ENCODE measurements at regions of chr2 and their contacts with region 1.

Region 1: GRCh38 chr2:70948337-70949003 is 12.8 kb downstream of the ATP6V1B1 start:
- DNase-seq: peak; percentile 86
- H3K4me3 ChIP-seq: peak overlapping the region; percentile 4
- H3K27ac ChIP-seq: no peak overlapping the region
- H3K4me1 ChIP-seq: no peaks in the 10 kb centered on the region
- H3K27me3 ChIP-seq: no peaks in the 10 kb centered on the region
- CTCF ChIP-seq: peak; percentile 92

Region 2: DNA sequence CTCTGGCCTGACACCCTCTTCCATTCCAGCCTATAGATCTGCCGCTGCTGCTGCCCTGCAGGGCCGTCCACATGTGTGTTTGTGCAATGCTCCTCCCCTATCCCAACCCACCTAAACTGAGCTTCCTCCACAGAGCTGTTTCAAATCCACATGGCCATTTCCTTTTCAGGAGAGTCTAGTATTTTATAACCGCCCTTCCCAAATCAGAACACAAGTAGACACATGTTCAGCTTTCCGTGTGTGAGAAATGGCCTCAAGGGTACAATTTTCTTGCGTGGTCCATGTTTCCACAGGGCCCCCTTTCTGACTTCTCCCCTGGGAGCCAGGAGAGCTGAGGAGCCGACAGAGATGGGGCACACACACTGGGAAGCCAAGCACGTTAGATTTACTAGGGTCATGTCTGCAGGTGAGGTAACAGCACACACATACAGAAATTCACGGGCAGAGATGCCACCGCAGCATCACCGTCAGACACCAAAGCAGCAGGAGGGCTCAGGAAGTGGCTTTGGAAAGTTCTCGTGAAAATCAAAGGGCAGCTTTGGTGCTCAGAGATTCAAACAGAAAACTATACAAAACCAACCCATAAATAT is 292.0 kb before region 1 on chr2:
- CTCF ChIA-PET with region 1: no interaction called
- POLR2A ChIA-PET with region 1: no interaction called
- intact Hi-C with region 1: loop called (anchors 5 kb)
- DNase-seq: no peak
- H3K4me3 ChIP-seq: no peak overlapping the region
- H3K27ac ChIP-seq: no peak overlapping the region
- H3K4me1 ChIP-seq: no peaks in the 10 kb centered on the region
- H3K27me3 ChIP-seq: no peaks in the 10 kb centered on the region
- CTCF ChIP-seq: no peak

Region 3: DNA sequence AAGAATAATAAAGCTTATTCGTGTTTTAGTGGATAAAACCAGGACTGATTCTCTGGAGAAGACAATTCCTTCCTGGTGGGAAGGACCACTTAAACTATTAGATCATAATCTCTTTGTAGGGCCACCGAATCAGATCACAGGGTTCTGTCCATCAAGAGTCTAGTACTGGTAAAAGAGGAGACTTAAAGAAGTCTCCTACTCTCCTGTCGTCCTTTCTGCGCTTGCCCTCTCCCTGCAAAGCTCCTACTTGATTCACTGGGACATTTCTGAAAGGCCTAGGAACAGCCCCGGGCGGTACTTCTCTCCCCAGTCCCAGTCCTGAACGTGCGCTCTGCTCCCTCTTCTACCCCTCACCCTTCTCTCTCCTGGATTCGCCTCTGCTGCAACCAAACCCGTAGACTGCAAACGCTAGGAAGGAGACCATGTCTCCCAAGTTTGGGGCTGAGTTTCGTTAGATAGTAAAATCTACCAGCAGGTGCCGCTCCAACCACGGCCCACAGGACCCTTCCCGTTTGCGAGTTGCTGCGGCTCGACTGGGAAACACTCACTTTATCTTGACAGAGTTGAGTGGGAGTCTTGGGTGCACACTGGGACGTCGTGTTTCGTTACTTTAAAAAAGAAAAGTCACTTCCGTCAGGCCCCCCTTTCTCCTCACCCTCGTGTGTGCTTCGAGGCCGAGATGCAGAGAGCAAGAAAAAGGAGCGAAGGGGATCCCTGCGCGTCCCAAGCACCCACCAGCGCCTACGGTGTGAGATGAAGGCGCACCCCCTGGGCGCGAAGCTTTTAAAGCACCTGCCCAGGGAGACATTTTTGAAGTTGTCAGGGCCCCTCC is 158.9 kb before region 1 on chr2:
- CTCF ChIA-PET with region 1: interaction called, 8 read pairs
- POLR2A ChIA-PET with region 1: no interaction called
- intact Hi-C with region 1: loop called (anchors 1 kb)
- DNase-seq: peak; percentile 80
- H3K4me3 ChIP-seq: peak overlapping the region; percentile 36
- H3K27ac ChIP-seq: no peak overlapping the region
- H3K4me1 ChIP-seq: peaks cover 3% of the 10 kb centered on the region
- H3K27me3 ChIP-seq: peaks cover 39% of the 10 kb centered on the region
- CTCF ChIP-seq: peak; percentile 89

Region 4: DNA sequence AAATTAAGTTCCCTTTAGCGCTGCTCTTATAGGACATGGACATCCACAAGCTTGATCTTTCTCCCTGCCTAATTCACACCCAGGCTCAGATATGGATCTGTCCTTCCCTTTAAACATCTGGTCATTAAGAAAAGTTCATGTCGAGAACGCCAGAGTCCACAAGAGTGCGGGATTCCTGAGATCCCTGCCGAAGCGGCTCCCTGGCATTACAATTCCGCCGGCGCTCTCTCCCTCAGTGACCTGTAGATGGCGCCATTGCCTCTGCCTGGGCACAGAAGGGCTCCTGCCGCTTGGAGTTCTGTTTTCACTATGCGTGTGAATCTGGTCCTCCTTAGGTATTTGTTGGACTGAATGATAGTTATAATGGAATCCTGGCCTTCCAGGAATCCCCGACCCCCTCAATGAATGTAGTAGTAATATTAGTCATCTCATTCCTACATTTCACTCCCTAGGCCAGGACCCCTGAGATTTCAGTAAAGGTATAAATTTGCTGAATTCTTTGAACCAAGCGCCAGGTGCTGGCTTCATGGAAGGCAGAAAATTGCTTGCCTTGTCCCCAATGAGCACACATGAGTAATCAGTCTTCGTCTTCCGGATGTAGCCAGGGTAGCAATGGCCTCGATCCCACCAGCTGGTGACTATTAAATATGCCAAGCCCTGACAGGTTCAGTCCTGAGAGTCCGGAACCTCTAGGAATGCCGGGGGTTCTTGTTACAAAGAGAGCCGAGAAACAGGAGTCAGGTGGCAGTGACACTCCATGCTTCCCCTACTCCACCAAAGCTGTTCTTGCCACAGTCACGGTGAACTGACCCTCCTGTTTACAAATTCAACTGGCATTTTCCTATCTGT is 86.5 kb before region 1 on chr2:
- CTCF ChIA-PET with region 1: interaction called, 6 read pairs
- POLR2A ChIA-PET with region 1: no interaction called
- intact Hi-C with region 1: loop called (anchors 2 kb)
- DNase-seq: peak; percentile 87
- H3K4me3 ChIP-seq: no peak overlapping the region
- H3K27ac ChIP-seq: no peak overlapping the region
- H3K4me1 ChIP-seq: no peaks in the 10 kb centered on the region
- H3K27me3 ChIP-seq: no peaks in the 10 kb centered on the region
- CTCF ChIP-seq: peak; percentile 99

Region 5: DNA sequence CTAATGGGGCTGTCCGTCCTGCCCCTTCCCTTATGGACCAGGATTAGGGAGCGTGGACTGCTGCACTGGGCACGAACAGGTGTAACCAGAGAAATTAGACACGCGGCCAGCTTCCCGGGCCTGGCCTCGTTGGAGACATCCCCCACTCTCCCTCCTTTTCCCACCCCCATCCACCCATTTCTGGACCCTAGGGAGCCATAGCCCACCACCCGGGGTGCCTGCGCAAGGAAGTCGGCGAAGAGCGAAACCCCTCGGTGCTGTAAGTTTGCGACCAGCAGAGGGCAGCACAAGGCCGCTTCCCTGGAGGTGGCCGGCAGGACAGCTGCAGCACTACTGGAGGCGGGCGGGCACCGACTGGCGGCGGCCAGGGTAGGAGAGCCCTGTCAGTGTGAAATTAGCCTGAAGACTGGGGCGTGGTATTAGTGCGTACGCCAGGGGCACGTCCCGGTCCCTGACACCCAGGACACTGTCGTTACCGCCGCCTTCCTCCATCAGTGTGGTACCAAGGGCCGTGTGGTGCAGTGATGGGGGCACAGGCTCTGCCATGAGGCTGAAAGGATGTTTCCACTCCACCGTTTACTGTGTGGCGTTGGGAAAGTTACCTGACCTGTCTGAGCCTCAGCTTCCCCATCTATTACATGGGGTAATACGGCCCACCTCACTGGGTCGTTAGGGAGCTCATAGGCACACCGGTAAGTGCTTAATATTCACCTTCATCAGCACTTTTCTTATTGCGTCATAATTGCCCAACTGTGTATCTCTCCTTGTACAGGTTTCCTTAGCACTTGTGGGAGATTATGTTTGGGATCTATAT is 76.9 kb before region 1 on chr2:
- CTCF ChIA-PET with region 1: interaction called, 24 read pairs
- POLR2A ChIA-PET with region 1: no interaction called
- intact Hi-C with region 1: loop called (anchors 1 kb)
- DNase-seq: peak; percentile 86
- H3K4me3 ChIP-seq: peak overlapping the region; percentile 14
- H3K27ac ChIP-seq: no peak overlapping the region
- H3K4me1 ChIP-seq: peaks cover 7% of the 10 kb centered on the region
- H3K27me3 ChIP-seq: no peaks in the 10 kb centered on the region
- CTCF ChIP-seq: peak; percentile 93

Measured in A673 (cell line).